Activated B cell treated with CpG ODN at 0.5 μM for 24 hours (primary cell): ENCODE measurements at regions of chr2 and their contacts with region 1.

Region 1: DNA sequence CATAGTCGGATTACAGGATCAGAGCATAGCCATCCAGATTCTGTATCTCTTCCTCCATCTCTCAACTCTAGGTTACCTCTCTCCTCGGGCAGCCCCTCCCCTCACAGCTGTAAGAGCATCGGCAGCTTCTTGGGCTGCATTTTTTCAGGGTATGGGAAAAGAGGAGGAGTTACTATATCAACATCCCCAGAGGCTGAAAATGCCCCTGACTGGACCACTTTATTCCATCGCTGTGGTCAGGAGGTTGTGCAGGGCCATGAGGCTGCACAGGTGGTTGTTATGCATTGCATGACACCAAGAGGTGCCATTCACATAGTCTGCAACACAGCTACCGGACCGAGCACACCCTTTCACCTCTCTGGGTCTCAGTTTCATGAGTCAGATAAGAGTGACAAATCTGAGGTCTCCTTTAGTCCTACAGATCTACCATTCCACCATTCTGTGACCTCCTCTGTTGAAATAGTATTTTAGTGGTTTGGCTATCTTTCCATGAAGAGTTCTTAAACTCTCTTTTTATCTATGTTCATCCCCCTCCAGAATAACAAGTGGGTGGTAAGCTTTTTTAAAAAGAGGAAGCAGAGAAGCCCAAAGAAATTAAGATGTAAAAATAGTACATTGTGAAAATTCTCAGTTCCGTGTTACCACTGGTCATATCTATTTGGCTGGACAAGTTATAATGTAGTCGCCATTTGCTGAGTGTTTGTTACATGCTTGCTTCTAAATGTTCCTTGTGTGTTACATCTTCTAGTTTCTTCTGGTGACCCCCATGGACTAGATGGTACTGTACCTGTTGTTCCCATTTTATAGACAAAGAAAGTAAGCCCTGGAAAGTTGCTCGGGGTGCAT is 56.6 kb upstream of the SLC1A4 start:
- DNase-seq: no peak
- ATAC-seq: peak; percentile 81
- H3K4me3 Mint-ChIP-seq: peak overlapping the region; percentile 90
- H3K27ac Mint-ChIP-seq: peak overlapping the region; percentile 93
- H3K4me1 Mint-ChIP-seq: peaks cover 97% of the 10 kb centered on the region
- H3K27me3 Mint-ChIP-seq: no peaks in the 10 kb centered on the region
- CTCF ChIP-seq: no peak

Region 2: GRCh38 chr2:64945973-64946768 is 13.6 kb after region 1 on chr2:
- CTCF ChIA-PET with region 1: interaction called, 3 read pairs
- POLR2A ChIA-PET with region 1: interaction called, 21 read pairs
- intact Hi-C with region 1: loop called (anchors 1 kb)
- DNase-seq: peak; percentile 61
- ATAC-seq: peak; percentile 93
- H3K4me3 Mint-ChIP-seq: peak overlapping the region; percentile 78
- H3K27ac Mint-ChIP-seq: peak overlapping the region; percentile 93
- H3K4me1 Mint-ChIP-seq: peaks cover 69% of the 10 kb centered on the region
- H3K27me3 Mint-ChIP-seq: no peaks in the 10 kb centered on the region
- CTCF ChIP-seq: no peak

Region 3: GRCh38 chr2:65024149-65024829 is 91.7 kb after region 1 on chr2:
- CTCF ChIA-PET with region 1: interaction called, 3 read pairs
- POLR2A ChIA-PET with region 1: interaction called, 12 read pairs
- intact Hi-C with region 1: no loop called
- DNase-seq: no peak
- ATAC-seq: no peak
- H3K4me3 Mint-ChIP-seq: peak overlapping the region; percentile 29
- H3K27ac Mint-ChIP-seq: peak overlapping the region; percentile 63
- H3K4me1 Mint-ChIP-seq: peaks cover 58% of the 10 kb centered on the region
- H3K27me3 Mint-ChIP-seq: no peaks in the 10 kb centered on the region
- CTCF ChIP-seq: no peak

Region 4: GRCh38 chr2:65056215-65057053 is 123.8 kb after region 1 on chr2 and contains the start of gene CEP68:
- CTCF ChIA-PET with region 1: no interaction called
- POLR2A ChIA-PET with region 1: interaction called, 12 read pairs
- intact Hi-C with region 1: no loop called
- DNase-seq: peak; percentile 95
- ATAC-seq: peak; percentile 91
- H3K4me3 Mint-ChIP-seq: peak within 1 kb of the TSS; percentile 97
- H3K27ac Mint-ChIP-seq: peak within 1 kb of the TSS; percentile 95
- H3K4me1 Mint-ChIP-seq: peaks cover 75% of the 10 kb centered on the region
- H3K27me3 Mint-ChIP-seq: no peaks in the 10 kb centered on the region
- CTCF ChIP-seq: no peak
- total RNA-seq, gene CEP68: 16.6 and 17.9 TPM in 2 replicates

Region 5: DNA sequence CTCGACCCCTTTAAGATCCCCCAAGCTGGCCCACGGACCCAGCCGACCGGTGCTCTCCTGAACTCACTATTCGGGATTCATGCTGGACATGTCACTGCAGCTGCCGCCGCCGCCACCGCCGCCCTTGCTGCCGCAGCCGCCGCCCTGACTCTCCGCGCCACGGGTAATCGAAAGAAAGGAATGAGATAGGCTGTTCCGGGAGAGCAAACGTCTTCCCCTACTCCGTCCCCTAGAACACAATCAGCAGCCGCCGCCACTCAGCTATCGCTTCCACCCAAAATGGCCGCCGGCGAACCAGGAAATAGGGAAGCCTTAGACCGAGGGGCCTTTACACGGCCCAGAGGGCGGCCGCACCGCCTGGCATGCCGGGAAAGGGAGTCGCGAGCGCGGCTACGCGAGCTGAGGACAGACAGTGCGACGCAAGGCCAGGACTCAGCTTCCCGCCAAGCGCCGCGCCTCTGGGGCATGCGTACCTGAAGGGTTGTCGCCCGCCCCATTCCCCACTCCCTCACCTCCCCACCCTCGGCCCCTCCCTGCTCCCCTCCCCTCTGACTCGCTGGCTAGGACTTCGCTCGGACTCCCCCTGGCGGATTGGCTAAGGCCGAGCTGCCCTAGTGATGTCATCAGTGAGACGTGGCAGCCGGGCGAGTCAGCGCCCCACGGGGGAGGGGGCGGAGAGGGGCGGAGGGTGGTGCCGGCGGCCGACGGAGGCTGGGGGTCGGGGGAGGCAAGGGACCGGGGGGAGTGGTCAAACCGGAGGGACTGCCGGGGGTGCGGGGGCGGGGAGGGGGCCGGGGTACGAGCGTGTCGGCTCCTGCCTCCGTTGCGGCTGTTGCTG is 197.5 kb after region 1 on chr2 and contains the start of gene RAB1A:
- CTCF ChIA-PET with region 1: no interaction called
- POLR2A ChIA-PET with region 1: no interaction called
- intact Hi-C with region 1: loop called (anchors 2 kb)
- DNase-seq: peak; percentile 91
- ATAC-seq: peak; percentile 93
- H3K4me3 Mint-ChIP-seq: peak within 1 kb of the TSS; percentile 100
- H3K27ac Mint-ChIP-seq: peak within 1 kb of the TSS; percentile 100
- H3K4me1 Mint-ChIP-seq: peaks cover 49% of the 10 kb centered on the region
- H3K27me3 Mint-ChIP-seq: no peaks in the 10 kb centered on the region
- CTCF ChIP-seq: no peak
- total RNA-seq, gene RAB1A: 45.0 and 46.4 TPM in 2 replicates